Pancreas (tissue), 10 donors: ENCODE measurements at regions of chr9 and their contacts with region 1.

Region 1: GRCh38 chr9:77651203-77651602 is 3.1 kb upstream of the GNA14 start:
- DNase-seq: no peak
- ATAC-seq: no peak
- H3K4me3 ChIP-seq: no peak overlapping the region
- H3K27ac ChIP-seq: no peak overlapping the region
- H3K4me1 ChIP-seq: peaks cover 0 to 5% (median 0%) of the 10 kb centered on the region in 3 donors
- H3K27me3 ChIP-seq: no peaks in the 10 kb centered on the region
- CTCF ChIP-seq: no peak

Region 2: DNA sequence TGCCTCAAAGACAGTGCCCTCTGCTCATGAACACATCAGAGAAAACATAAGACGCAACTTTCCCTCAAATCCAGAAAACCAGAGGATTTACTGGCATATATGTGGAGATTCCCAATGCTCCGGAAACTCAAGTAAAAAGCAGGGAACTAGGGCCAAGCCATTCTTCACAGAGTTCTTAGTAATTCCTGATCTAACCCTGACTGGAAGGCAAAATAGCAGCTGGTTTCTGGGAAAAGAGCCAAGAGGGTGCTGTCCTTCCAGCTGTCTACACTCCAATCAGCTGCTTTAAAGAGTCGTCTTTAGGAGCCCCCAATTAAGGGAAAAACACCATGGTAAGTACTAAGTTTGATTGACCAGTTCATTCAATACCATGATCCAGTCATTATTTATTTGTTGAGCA is 52.7 kb before region 1 on chr9:
- intact Hi-C with region 1: loop called in 1 of 3 experiments (anchors 10 kb)
- DNase-seq: peak in 3 of 6 donors; percentile 37 to 46 (median 38)
- ATAC-seq: peak; percentile 55 to 80 (median 74)
- H3K4me3 ChIP-seq: no peak overlapping the region
- H3K27ac ChIP-seq: no peak overlapping the region
- H3K4me1 ChIP-seq: peaks cover 0 to 5% (median 0%) of the 10 kb centered on the region in 3 donors
- H3K27me3 ChIP-seq: no peaks in the 10 kb centered on the region
- CTCF ChIP-seq: no peak

Region 3: GRCh38 chr9:77899679-77900354 is 248.6 kb after region 1 on chr9:
- intact Hi-C with region 1: no loop called
- DNase-seq: no peak
- ATAC-seq: no peak
- H3K4me3 ChIP-seq: no peak overlapping the region
- H3K27ac ChIP-seq: no peak overlapping the region
- H3K4me1 ChIP-seq: no peaks in the 10 kb centered on the region
- H3K27me3 ChIP-seq: no peaks in the 10 kb centered on the region
- CTCF ChIP-seq: no peak